Naive thymus-derived CD4-positive, alpha-beta T cell (primary cell): ENCODE measurements at regions of chr1 and their contacts with region 1.

Region 1: DNA sequence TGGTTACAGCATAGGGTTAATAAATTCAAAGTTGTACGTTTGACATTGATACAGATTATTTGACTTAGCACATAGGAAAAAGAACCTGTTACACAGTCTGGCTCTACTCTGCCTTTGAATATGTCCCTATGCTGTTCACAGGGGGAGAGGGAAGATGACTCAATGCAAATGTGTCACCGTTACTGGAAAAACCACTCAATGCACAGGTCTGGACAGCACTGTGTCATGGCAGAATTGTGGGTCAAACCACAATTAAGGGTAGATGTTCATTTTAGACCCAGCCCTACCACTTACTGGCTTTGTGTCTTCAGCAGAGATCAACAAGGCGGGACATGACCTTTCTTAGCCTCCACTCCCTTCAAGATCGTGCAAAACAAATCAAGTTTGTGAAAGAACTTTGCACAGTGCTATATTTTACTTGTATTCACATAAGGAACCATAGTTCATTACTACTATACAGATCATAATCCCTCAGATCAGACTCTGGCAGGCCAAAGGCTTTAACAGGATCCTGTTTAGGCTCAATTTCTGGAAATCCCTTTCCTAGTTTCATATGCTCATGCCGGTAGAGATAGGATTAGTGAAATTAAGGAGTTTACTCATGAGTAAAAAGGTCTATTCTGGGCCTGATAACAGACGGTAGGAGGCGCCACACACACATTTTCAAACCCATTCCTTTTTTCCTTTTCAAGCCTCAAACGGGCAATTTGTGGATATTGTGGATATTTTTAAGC is 22.1 kb downstream of the EIF2D start:
- DNase-seq: peak in 3 of 9 donors; percentile 31 to 60 (median 36)
- ATAC-seq: peak; percentile 84
- H3K4me3 ChIP-seq: no peak overlapping the region
- H3K4me3 Mint-ChIP-seq: peak overlapping the region in 2 of 10 donors; percentile 70 to 75
- H3K27ac ChIP-seq: peak overlapping the region; percentile 28
- H3K27ac Mint-ChIP-seq: peak overlapping the region; percentile 27 to 91 (median 80)
- H3K4me1 ChIP-seq: peaks cover 7 to 19% of the 10 kb centered on the region in 2 donors
- H3K4me1 Mint-ChIP-seq: peaks cover 21 to 70% (median 45%) of the 10 kb centered on the region in 7 donors
- H3K27me3 ChIP-seq: no peaks in the 10 kb centered on the region
- H3K27me3 Mint-ChIP-seq: no peaks in the 10 kb centered on the region

Region 2: GRCh38 chr1:205939690-205940330 is 650.4 kb before region 1 on chr1:
- CTCF ChIA-PET with region 1: no interaction called
- POLR2A ChIA-PET with region 1: no interaction called
- intact Hi-C with region 1: no loop called
- DNase-seq: no peak
- ATAC-seq: peak; percentile 27
- H3K4me3 ChIP-seq: no peak overlapping the region
- H3K4me3 Mint-ChIP-seq: no peak overlapping the region
- H3K27ac ChIP-seq: no peak overlapping the region
- H3K27ac Mint-ChIP-seq: no peak overlapping the region
- H3K4me1 ChIP-seq: no peaks in the 10 kb centered on the region
- H3K4me1 Mint-ChIP-seq: no peaks in the 10 kb centered on the region
- H3K27me3 ChIP-seq: no peaks in the 10 kb centered on the region
- H3K27me3 Mint-ChIP-seq: peaks cover 38 to 74% (median 42%) of the 10 kb centered on the region in 5 donors

Region 3: GRCh38 chr1:206556750-206557635 is 33.2 kb before region 1 on chr1:
- CTCF ChIA-PET with region 1: interaction called, 424 read pairs
- POLR2A ChIA-PET with region 1: interaction called, 722 read pairs
- intact Hi-C with region 1: loop called in 1 of 2 experiments (anchors 1 kb)
- DNase-seq: peak; percentile 78 to 93 (median 88)
- ATAC-seq: peak; percentile 86
- H3K4me3 ChIP-seq: peak overlapping the region; percentile 90
- H3K4me3 Mint-ChIP-seq: peak overlapping the region; percentile 77 to 99 (median 96)
- H3K27ac ChIP-seq: peak overlapping the region; percentile 90
- H3K27ac Mint-ChIP-seq: peak overlapping the region; percentile 86 to 100 (median 94)
- H3K4me1 ChIP-seq: peaks cover 61 to 66% of the 10 kb centered on the region in 2 donors
- H3K4me1 Mint-ChIP-seq: peaks cover 59 to 75% (median 70%) of the 10 kb centered on the region in 7 donors
- H3K27me3 ChIP-seq: no peaks in the 10 kb centered on the region
- H3K27me3 Mint-ChIP-seq: no peaks in the 10 kb centered on the region

Region 4: DNA sequence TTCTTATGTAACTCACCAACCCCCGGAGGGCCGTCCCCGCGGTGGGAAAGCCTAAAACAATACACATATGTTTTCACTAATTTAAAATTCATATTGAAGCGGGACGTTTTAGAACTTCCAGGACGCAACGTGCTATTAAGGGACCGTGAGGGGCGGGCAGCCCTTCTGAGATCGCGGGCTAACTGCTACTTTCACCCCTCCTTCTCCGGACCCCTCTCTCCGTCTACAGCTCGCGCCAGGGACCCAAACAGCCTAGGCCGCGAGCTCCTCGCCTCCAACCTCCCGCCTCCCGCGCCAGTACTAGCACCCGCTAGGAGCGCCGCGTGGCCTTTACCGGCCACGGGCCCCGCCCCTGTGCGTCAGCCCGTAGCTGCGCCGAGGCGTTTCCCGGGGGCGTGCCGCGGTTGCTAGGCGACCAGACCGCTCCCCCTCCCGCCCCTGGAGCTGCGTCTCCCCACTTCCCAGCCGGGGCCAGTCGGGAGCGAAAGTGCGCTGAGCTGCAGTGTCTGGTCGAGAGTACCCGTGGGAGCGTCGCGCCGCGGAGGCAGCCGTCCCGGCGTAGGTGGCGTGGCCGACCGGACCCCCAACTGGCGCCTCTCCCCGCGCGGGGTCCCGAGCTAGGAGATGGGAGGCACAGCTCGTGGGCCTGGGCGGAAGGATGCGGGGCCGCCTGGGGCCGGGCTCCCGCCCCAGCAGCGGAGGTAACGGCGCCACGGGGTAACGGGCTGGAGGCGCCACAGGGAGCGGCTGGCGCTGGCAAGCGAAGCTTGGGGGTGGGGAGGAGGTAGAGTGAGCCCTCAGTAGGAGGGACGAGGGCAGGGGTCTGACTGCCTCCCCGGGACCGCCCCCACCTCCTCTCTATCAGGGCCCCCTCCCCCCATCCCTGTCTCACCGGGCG is 45.1 kb after region 1 on chr1 and contains the start of gene DYRK3:
- CTCF ChIA-PET with region 1: no interaction called
- POLR2A ChIA-PET with region 1: no interaction called
- intact Hi-C with region 1: no loop called
- DNase-seq: peak; percentile 71 to 98 (median 80)
- ATAC-seq: peak; percentile 97
- H3K4me3 ChIP-seq: peak within 1 kb of the TSS; percentile 67
- H3K4me3 Mint-ChIP-seq: peak within 1 kb of the TSS; percentile 85 to 96 (median 90)
- H3K27ac ChIP-seq: peak within 1 kb of the TSS; percentile 57
- H3K27ac Mint-ChIP-seq: peak within 1 kb of the TSS; percentile 64 to 93 (median 85)
- H3K4me1 ChIP-seq: peaks cover 8 to 16% of the 10 kb centered on the region in 2 donors
- H3K4me1 Mint-ChIP-seq: peaks cover 14 to 29% (median 18%) of the 10 kb centered on the region in 7 donors
- H3K27me3 ChIP-seq: no peaks in the 10 kb centered on the region
- H3K27me3 Mint-ChIP-seq: peaks cover 7 to 13% (median 9%) of the 10 kb centered on the region in 5 donors
- total RNA-seq, gene DYRK3: 0.22 to 8.2 (median 0.69) TPM

Region 5: DNA sequence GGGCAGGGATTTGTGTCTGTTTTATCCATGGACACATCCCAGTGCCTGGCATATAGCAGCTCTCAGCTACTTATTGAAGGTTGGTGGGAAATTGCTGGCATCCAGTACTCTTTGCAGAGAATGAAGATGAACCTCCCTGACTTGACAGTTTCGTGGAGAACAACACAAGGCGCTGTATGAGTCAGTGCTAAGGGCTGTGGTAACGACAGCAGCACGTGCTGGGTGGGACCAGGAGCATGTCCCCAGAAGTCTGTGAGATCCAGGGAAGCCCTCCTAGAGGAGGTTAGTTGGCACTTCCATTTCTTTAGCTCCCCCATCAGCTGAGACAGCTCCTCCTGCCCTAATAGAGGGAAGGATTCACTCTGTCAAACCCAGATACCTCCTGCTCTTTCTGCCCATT is 154.5 kb after region 1 on chr1:
- CTCF ChIA-PET with region 1: no interaction called
- POLR2A ChIA-PET with region 1: no interaction called
- intact Hi-C with region 1: no loop called
- DNase-seq: no peak
- ATAC-seq: peak; percentile 59
- H3K4me3 ChIP-seq: no peak overlapping the region
- H3K4me3 Mint-ChIP-seq: no peak overlapping the region
- H3K27ac ChIP-seq: no peak overlapping the region
- H3K27ac Mint-ChIP-seq: peak overlapping the region in 5 of 9 donors; percentile 16 to 75 (median 32)
- H3K4me1 ChIP-seq: peaks cover 6 to 19% of the 10 kb centered on the region in 2 donors
- H3K4me1 Mint-ChIP-seq: peaks cover 26 to 71% (median 35%) of the 10 kb centered on the region in 7 donors
- H3K27me3 ChIP-seq: no peaks in the 10 kb centered on the region
- H3K27me3 Mint-ChIP-seq: peaks cover 0 to 20% (median 0%) of the 10 kb centered on the region in 5 donors

Region 6: DNA sequence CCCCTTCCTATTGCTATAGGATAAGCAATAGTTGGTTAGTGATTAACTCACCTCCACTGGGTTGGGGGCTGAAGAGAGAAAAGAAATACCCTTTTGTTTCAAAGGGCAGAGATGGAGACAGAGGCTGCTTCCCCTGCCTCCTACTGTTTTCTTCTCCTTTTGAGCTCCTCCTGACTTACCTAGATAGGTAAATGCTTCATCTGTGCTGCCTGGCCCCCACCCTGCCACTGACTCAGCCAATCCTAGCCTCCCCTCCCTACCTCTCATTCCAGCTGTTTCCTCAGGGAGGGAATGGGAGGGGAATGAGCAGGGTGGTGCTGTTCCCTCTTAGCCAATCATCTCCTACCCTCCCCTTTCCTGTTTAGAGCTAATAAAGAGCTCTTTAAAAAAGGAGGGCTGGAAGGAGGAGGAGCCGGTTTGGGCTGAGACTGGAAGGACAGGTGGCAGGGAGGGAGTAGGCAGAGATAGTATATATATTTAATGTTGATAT is 442.4 kb after region 1 on chr1 and contains the start of gene C1orf116:
- CTCF ChIA-PET with region 1: no interaction called
- POLR2A ChIA-PET with region 1: no interaction called
- intact Hi-C with region 1: no loop called
- DNase-seq: no peak
- ATAC-seq: no peak
- H3K4me3 ChIP-seq: no peak within 1 kb of the TSS
- H3K4me3 Mint-ChIP-seq: no peak within 1 kb of the TSS
- H3K27ac ChIP-seq: no peak within 1 kb of the TSS
- H3K27ac Mint-ChIP-seq: no peak within 1 kb of the TSS
- H3K4me1 ChIP-seq: no peaks in the 10 kb centered on the region
- H3K4me1 Mint-ChIP-seq: peaks cover 0 to 6% (median 0%) of the 10 kb centered on the region in 7 donors
- H3K27me3 ChIP-seq: peaks cover 0 to 9% of the 10 kb centered on the region in 2 donors
- H3K27me3 Mint-ChIP-seq: peaks cover 27 to 61% (median 31%) of the 10 kb centered on the region in 5 donors
- total RNA-seq, gene C1orf116: 0.11 to 0.15 TPM in 2 of 5 experiments, not detected in the others